ENCODE measurements at regions of chr17 and their contacts with region 1.

Region 1: DNA sequence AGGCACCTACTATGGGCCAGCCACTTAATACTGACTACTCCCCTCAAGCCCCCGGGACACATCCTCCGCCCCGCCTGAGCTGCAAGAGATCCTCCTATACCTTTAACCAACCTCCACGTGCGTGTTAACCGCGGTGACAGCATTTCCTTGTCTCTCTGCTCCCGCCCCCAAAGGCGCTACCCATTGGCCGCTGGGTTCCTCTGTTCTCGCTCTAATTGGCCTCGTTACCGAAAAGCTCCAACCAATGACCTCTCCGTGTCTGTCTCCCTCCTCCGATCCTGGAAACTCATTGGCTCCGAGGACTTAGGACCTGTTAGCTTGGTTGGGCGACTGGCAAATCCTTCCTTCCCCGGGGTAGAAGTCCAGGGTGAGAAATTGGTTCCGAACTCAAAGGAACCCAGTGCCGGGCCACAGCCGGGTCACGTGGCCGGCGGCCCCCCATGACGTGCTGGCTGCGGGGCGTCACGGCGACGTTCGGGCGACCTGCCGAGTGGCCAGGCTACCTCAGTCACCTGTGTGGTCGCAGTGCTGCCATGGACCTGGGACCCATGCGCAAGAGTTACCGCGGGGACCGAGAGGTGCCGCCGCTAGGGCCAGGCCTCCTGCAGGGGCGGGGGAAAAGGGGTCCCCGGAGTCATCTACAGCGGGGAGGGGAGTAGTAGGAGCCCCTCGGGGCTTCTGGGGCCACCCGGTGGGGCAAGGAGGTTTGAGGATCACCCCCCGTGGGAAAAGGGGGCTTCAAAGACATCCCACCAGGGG is at the start of gene PNPO:
- DNase-seq: peak; percentile 97
- H3K4me3 Mint-ChIP-seq: peak within 1 kb of the TSS; percentile 77
- H3K27ac Mint-ChIP-seq: peak within 1 kb of the TSS; percentile 80
- H3K4me1 Mint-ChIP-seq: peaks cover 56% of the 10 kb centered on the region
- H3K27me3 Mint-ChIP-seq: no peaks in the 10 kb centered on the region
- total RNA-seq, gene PNPO: 24.6 to 25.1 TPM

Region 2: DNA sequence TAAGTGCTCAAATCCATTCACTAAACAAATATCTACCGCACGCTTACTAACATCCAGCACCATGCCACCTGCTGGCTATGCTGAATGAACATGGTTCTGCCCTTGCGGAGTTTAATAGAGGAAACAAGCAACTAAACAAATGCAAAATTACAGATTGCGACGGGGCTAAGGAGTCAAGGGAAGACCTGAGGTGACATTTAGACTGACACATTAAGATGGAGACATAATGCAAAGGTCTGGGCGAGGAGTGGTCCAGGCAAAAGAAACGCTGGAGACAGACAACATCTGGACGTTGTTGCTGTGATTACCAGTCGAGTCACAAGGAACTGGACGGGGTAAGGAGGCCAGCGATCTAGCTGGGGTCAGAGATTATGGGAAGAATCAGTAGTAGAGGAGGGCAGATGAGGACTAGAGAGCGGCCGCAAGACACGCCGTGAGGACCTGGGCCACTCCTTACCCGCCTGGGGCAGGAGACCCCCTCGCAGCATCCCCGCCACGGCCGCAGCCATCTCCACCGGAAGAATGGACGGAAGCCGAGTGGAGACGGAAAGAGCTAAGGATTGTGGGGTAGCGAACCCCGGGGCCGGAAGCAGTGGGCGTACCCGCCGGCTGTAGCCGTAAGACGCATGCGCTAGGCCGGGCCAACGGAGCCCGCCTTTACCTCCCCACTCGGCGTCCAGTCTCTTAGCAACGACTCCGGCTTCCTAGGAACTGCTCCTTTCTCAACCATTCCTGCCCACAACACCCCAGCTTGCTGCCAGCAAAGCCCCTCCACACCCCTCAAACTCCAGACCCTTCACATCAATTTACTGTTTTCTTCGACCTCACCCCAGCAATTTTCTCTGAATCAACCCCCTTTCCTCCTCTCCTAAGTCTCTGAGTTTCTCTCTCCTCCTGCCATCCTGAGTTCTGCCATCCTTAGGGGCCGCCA is 110.1 kb before region 1 on chr17 and contains the starts of genes LRRC46 and MRPL10:
- CTCF ChIA-PET with region 1: interaction called, 5 read pairs
- POLR2A ChIA-PET with region 1: interaction called, 17 read pairs
- DNase-seq: peak; percentile 94
- H3K4me3 Mint-ChIP-seq: peak within 1 kb of the TSS; percentile 90
- H3K27ac Mint-ChIP-seq: peak within 1 kb of the TSS; percentile 100
- H3K4me1 Mint-ChIP-seq: peaks cover 69% of the 10 kb centered on the region
- H3K27me3 Mint-ChIP-seq: no peaks in the 10 kb centered on the region
- total RNA-seq, gene LRRC46: 0.45 to 0.53 TPM
- total RNA-seq, gene MRPL10: 91.5 to 95.7 TPM

Region 3: GRCh38 chr17:47840740-47841603 is 100.4 kb before region 1 on chr17 and contains the start of gene SCRN2:
- CTCF ChIA-PET with region 1: interaction called, 12 read pairs
- POLR2A ChIA-PET with region 1: interaction called, 3 read pairs
- DNase-seq: peak; percentile 90
- H3K4me3 Mint-ChIP-seq: peak within 1 kb of the TSS; percentile 93
- H3K27ac Mint-ChIP-seq: peak within 1 kb of the TSS; percentile 66
- H3K4me1 Mint-ChIP-seq: peaks cover 36% of the 10 kb centered on the region
- H3K27me3 Mint-ChIP-seq: peaks cover 20% of the 10 kb centered on the region
- total RNA-seq, gene SCRN2: 29.1 to 29.8 TPM

Region 4: GRCh38 chr17:47879028-47879585 is 62.3 kb before region 1 on chr17:
- CTCF ChIA-PET with region 1: no interaction called
- POLR2A ChIA-PET with region 1: no interaction called
- DNase-seq: no peak
- H3K4me3 Mint-ChIP-seq: no peak overlapping the region
- H3K27ac Mint-ChIP-seq: no peak overlapping the region
- H3K4me1 Mint-ChIP-seq: peaks cover 16% of the 10 kb centered on the region
- H3K27me3 Mint-ChIP-seq: peaks cover 39% of the 10 kb centered on the region

Region 5: DNA sequence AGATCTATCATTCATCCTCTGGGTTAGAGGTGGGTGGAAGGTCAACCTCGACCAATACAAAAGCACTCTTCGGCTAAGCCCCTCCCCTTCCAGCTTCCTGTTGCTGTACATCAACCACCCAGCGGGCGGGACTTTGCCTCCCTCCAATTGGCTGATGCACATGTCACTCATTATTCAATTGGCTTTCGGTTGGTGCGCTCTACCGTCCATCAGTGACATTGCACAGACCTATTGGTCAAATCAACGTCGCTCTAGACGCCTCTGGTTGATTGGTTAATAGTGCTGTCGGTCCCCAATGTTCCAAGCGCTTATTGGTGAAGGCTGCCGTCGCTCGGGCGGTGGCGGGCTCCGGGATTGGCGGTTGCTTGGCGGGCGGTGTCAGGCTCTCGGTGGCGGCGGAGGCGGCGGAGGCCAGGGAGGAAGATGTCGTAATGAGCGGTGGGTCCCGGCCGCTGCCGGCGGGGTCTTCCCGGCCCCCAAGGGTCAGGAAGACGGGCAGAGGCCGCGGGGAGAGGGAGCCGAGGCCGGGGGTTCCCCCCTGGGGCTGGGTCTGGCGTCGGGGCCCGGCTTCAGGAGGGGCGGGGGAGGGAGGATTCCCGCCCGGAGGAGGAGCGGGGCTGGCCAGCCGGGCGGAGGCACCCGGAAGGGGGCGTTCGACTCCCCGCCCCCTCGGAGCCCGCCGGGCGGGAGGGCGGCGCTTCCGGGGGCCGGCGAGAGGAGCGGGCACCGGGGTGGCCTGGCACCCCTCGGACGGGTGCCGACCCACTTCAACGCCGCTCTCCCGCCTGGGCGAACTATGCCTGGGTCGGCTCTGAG is 45.4 kb before region 1 on chr17 and contains the start of gene SP2:
- CTCF ChIA-PET with region 1: interaction called, 4 read pairs
- POLR2A ChIA-PET with region 1: interaction called, 39 read pairs
- DNase-seq: peak; percentile 100
- H3K4me3 Mint-ChIP-seq: peak within 1 kb of the TSS; percentile 91
- H3K27ac Mint-ChIP-seq: peak within 1 kb of the TSS; percentile 95
- H3K4me1 Mint-ChIP-seq: peaks cover 48% of the 10 kb centered on the region
- H3K27me3 Mint-ChIP-seq: no peaks in the 10 kb centered on the region
- total RNA-seq, gene SP2: 24.6 to 25.6 TPM

Region 6: DNA sequence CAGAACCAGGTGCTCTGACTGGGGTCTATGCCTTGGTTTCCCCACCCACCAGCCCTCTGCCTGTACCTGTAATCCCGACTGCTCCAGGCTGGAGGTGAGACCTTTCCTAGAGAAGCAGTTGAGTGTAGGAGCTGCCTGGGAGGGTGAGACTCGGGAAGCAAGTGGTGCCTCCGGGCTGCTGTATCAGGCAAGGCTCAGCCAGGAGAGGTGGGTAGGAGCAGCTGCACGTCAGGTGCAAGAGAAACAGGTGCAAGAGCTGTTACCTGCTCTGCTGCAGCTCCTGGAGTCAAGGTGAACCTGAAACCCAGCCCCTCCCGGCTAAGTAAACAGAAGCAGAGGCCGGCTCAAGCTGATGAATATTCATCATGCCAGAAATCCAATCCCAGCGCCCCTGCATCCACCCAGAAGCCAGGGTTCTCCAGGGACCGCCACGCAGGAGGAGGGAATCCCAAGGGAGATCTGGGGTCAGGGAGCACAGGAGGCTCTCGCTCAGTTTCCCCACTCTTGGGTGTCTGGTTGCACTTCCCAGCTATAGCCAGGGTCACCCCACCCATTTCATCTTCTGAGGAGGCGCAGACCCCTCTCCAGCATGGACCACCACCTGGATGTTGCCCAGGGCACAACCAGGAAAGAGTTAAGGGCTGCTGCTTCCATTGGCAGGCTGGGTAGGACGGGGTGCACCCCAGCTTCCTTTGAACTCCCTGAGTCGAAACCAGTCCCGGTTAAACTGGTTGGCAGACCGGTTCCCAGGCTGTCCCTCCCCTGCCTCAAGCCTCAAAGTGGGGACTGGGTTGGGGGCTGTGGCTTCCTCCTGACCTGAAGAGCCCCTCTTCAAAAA is 16.4 kb after region 1 on chr17 and contains the start of gene PRR15L:
- CTCF ChIA-PET with region 1: interaction called, 31 read pairs
- POLR2A ChIA-PET with region 1: no interaction called
- DNase-seq: no peak
- H3K4me3 Mint-ChIP-seq: no peak within 1 kb of the TSS
- H3K27ac Mint-ChIP-seq: no peak within 1 kb of the TSS
- H3K4me1 Mint-ChIP-seq: no peaks in the 10 kb centered on the region
- H3K27me3 Mint-ChIP-seq: peaks cover 2% of the 10 kb centered on the region
- total RNA-seq, gene PRR15L: not detected

Region 7: DNA sequence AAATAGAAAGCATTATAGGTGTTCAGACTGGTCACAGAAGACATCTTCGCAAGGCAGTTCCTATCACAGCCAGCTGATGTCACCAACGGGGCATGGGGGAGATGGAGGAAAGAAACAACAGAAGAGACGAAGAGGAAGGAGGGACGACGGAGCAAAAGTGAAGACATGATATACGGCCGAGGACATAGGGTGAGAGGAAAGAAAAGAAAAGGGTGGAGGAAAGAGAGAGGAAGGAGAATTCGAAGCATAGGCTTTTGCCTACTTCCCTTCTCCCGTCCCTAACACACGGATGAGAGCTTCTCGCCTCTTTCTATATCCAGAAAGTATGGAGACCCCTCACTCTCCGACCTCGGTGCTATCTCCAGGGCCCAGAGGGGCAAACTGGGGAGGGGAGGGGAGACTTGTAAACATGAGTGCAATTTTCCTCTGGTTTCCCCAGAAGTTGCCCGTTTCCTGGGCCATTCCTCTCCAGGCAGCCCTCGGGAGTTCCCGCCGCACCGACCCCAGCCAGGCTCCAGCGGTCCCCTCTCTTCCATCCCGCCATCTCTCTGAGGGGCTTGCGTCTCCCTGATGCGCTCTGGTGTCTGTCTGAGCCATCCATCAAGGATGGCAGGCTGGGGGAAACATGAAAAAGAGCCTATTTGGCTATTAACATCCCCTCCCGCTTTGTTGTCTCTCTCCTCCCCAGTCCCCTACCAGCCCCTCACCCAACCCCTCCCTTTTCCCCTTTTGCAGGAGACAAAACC is 70.2 kb after region 1 on chr17:
- CTCF ChIA-PET with region 1: interaction called, 49 read pairs
- POLR2A ChIA-PET with region 1: no interaction called
- DNase-seq: peak; percentile 68
- H3K4me3 Mint-ChIP-seq: peak overlapping the region; percentile 73
- H3K27ac Mint-ChIP-seq: no peak overlapping the region
- H3K4me1 Mint-ChIP-seq: peaks cover 23% of the 10 kb centered on the region
- H3K27me3 Mint-ChIP-seq: peaks cover 49% of the 10 kb centered on the region

Measured in activated CD4-positive, alpha-beta memory T cell treated with anti-CD3 and anti-CD28 coated beads, Interleukin-2, amount 10 ng/mL, durations not matched to agents 7 days and 5 days (primary cell).